CD4-positive, alpha-beta memory T cell (primary cell): ENCODE measurements at regions of chr11 and their contacts with region 1.

Region 1: GRCh38 chr11:67630228-67630942 is 648 bp upstream of the NUDT8 start:
- DNase-seq: peak; percentile 89 to 92 (median 90)
- H3K4me3 ChIP-seq: peak overlapping the region; percentile 3 to 84
- H3K4me3 Mint-ChIP-seq: peak overlapping the region; percentile 84 to 91 (median 89)
- H3K27ac ChIP-seq: peak overlapping the region; percentile 81
- H3K27ac Mint-ChIP-seq: peak overlapping the region; percentile 76 to 96 (median 93)
- H3K4me1 ChIP-seq: peaks cover 14% of the 10 kb centered on the region
- H3K4me1 Mint-ChIP-seq: peaks cover 3 to 11% (median 7%) of the 10 kb centered on the region in 4 donors
- H3K27me3 ChIP-seq: no peaks in the 10 kb centered on the region
- H3K27me3 Mint-ChIP-seq: no peaks in the 10 kb centered on the region

Region 2: DNA sequence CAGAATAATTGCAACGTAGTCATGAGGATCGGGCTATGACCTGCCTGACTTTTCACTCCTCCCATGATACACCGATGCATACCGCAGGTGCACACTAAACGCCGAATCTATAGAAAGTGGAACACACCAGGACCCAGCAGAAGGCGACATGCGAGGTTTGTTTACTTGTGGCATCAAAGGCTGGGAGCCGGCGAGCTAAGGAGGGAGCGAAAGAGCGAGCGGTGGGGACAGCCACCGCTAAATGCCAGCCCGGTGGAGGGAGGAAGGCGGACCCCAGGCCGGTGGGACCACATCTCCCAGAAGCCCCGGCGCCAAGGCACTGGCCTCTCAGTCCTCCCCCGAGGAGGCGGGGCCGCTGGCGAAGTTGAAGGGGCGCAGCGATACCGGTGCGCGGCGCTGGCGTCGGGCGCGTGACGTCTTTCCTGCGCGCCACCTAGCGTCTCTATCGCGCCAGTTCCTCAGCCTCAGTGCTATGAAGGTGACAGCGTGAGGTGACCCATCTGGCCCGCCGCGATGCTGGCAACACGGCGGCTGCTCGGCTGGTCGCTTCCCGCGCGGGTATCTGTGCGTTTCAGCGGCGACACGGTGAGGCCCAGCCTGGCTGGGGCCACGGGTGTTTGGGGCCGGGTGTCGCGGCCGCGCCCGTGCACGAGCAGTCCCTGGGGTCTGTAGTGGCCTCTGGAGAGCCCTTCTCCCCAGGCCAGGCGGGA is 23.7 kb before region 1 on chr11 and contains the start of gene NDUFV1:
- CTCF ChIA-PET with region 1: interaction called, 4 read pairs
- POLR2A ChIA-PET with region 1: no interaction called
- intact Hi-C with region 1: loop called (anchors 1 kb)
- DNase-seq: peak; percentile 94 to 96 (median 94)
- H3K4me3 ChIP-seq: peak within 1 kb of the TSS; percentile 38 to 86
- H3K4me3 Mint-ChIP-seq: peak within 1 kb of the TSS; percentile 86 to 97 (median 92)
- H3K27ac ChIP-seq: peak within 1 kb of the TSS; percentile 83
- H3K27ac Mint-ChIP-seq: peak within 1 kb of the TSS; percentile 76 to 97 (median 93)
- H3K4me1 ChIP-seq: peaks cover 13% of the 10 kb centered on the region
- H3K4me1 Mint-ChIP-seq: peaks cover 4 to 27% (median 9%) of the 10 kb centered on the region in 4 donors
- H3K27me3 ChIP-seq: no peaks in the 10 kb centered on the region
- H3K27me3 Mint-ChIP-seq: peaks cover 2 to 6% of the 10 kb centered on the region in 2 donors
- total RNA-seq, gene NDUFV1: 204 to 212 TPM

Region 3: DNA sequence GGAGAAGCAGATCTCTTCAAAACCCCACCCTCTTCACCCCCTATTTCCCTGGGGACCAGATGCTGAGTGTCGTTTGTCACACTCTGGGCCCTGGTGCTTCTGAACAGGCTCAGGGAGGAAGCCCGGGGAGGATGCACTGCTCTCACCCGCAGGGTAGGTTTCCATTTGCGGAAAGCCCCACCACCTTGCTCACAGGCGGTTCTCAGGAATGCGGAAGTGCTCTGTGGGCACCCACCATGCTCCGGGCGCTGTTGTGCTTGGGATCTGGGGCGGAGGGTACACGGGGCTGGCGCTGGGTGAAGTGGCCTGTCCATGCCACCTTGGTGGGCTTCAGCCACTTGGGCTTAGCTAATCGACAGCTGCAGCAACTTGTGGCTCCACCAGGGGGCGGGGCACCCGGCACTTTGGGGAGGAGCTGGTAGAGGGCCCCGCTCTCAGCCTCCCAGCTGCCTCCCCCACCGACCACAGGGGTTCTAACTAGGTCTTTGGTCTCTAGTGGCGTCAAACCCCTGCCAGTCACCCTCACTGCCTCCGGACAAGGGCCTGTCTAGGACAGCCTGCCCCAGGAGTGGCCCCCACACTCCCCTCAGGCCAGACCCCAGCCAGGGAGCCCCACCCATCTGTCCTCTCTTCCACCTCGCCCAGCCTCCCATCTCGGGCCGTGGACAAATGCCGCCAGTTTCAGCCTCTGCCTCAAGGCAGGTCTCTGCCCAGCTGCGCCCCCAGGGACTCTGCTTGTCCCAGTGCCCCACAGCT is 16.2 kb before region 1 on chr11:
- CTCF ChIA-PET with region 1: interaction called, 55 read pairs
- POLR2A ChIA-PET with region 1: interaction called, 44 read pairs
- intact Hi-C with region 1: loop called (anchors 2 kb)
- DNase-seq: peak; percentile 84 to 94 (median 88)
- H3K4me3 ChIP-seq: peak overlapping the region; percentile 57 to 59
- H3K4me3 Mint-ChIP-seq: peak overlapping the region; percentile 80 to 88 (median 85)
- H3K27ac ChIP-seq: peak overlapping the region; percentile 94
- H3K27ac Mint-ChIP-seq: peak overlapping the region; percentile 97 to 99 (median 98)
- H3K4me1 ChIP-seq: peaks cover 33% of the 10 kb centered on the region
- H3K4me1 Mint-ChIP-seq: peaks cover 13 to 37% (median 20%) of the 10 kb centered on the region in 4 donors
- H3K27me3 ChIP-seq: no peaks in the 10 kb centered on the region
- H3K27me3 Mint-ChIP-seq: peaks cover 0 to 2% of the 10 kb centered on the region in 2 donors

Region 4: GRCh38 chr11:67648140-67649123 is 18.0 kb after region 1 on chr11:
- CTCF ChIA-PET with region 1: interaction called, 12 read pairs
- POLR2A ChIA-PET with region 1: interaction called, 34 read pairs
- intact Hi-C with region 1: no loop called
- DNase-seq: peak in 4 of 5 donors; percentile 30 to 56 (median 47)
- H3K4me3 ChIP-seq: no peak overlapping the region
- H3K4me3 Mint-ChIP-seq: peak overlapping the region in 2 of 8 donors; percentile 36 to 65
- H3K27ac ChIP-seq: no peak overlapping the region
- H3K27ac Mint-ChIP-seq: peak overlapping the region in 4 of 7 donors; percentile 8 to 42 (median 20)
- H3K4me1 ChIP-seq: peaks cover 35% of the 10 kb centered on the region
- H3K4me1 Mint-ChIP-seq: peaks cover 20 to 44% (median 35%) of the 10 kb centered on the region in 4 donors
- H3K27me3 ChIP-seq: no peaks in the 10 kb centered on the region
- H3K27me3 Mint-ChIP-seq: no peaks in the 10 kb centered on the region

Region 5: DNA sequence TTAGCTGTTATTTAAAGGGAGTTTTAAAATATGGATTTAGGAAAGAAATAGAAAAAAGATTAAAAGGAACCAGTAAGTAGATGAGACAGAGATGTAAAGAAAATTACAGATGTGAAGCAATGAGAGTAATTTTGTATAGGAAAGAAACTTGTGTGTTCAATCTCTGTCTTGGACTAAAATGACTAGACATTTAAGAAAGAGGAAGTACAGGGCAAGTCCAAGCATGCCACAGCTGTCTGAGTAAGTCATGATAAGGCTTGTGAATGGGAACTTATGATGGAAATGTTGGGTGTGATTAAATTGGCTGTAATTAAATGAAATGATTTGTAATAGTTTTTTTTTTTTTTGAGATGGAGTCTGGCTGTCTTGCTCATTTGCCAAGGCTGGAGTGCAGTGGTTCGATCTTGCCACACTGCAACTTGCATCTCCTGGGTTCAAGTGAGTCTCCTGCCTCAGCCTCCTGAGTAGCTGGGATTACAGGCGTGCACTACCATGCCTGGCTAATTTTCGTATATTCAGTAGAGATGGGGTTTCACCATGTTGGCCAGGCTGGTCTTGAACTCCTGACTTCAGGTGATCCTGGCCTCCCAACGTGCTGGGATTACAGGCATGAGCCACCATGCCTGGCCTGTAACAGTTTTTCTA is 26.0 kb after region 1 on chr11:
- CTCF ChIA-PET with region 1: interaction called, 67 read pairs
- POLR2A ChIA-PET with region 1: interaction called, 34 read pairs
- intact Hi-C with region 1: loop called (anchors 1 kb)
- DNase-seq: no peak
- H3K4me3 ChIP-seq: no peak overlapping the region
- H3K4me3 Mint-ChIP-seq: no peak overlapping the region
- H3K27ac ChIP-seq: no peak overlapping the region
- H3K27ac Mint-ChIP-seq: no peak overlapping the region
- H3K4me1 ChIP-seq: peaks cover 6% of the 10 kb centered on the region
- H3K4me1 Mint-ChIP-seq: peaks cover 0 to 10% (median 4%) of the 10 kb centered on the region in 4 donors
- H3K27me3 ChIP-seq: no peaks in the 10 kb centered on the region
- H3K27me3 Mint-ChIP-seq: no peaks in the 10 kb centered on the region